ENCODE measurements at regions of chr19 and their contacts with region 1.

Region 1: GRCh38 chr19:48821671-48822070 is 10.8 kb upstream of the BCAT2 start:
- DNase-seq: no peak
- H3K4me3 ChIP-seq: no peak overlapping the region
- H3K27ac ChIP-seq: no peak overlapping the region
- H3K4me1 ChIP-seq: peaks cover 3% of the 10 kb centered on the region
- CTCF ChIP-seq: no peak

Region 2: GRCh38 chr19:48271531-48272151 is 550.0 kb before region 1 on chr19:
- CTCF ChIA-PET with region 1: no interaction called
- POLR2A ChIA-PET with region 1: no interaction called
- intact Hi-C with region 1: no loop called
- DNase-seq: peak; percentile 31
- H3K4me3 ChIP-seq: peak overlapping the region; percentile 58
- H3K27ac ChIP-seq: no peak overlapping the region
- H3K4me1 ChIP-seq: no peaks in the 10 kb centered on the region
- CTCF ChIP-seq: no peak

Region 3: DNA sequence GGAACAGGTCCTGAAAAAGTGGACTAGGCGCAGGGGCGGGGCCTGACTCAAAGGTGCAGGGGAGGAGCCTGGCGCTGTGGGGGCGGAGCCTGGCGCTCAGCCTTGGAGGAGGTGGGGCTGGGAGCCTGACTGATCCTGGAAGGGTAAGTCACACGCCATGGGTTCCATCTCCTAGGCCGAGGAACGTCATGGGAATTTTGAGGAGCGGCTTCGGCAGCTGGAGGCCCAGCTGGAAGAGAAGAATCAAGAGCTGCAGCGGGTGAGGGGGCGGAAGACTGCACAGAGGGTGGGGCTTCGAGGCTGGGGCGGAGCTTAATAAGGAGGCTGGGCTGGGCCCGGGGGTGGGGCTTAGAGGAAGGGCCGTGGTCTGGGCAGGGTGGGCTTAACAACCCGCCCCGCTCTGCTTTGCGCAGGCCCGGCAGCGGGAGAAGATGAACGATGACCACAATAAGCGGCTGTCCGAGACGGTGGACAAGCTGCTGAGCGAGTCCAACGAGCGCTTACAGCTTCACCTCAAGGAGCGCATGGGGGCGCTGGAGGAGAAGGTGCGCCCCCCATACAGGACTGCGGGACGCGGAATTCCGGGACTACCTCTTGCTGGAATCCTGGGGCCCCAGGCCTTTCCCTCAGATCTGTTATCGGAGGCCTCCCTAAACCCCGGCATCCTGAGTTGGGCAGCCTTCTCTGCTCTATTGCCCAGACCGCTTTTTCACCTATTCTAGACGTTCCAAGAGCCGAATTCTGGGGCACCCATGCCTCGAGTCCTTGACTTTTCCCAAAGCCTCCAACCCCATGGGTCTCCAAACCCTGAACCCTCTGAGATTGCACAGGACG is 312.2 kb after region 1 on chr19:
- CTCF ChIA-PET with region 1: no interaction called
- POLR2A ChIA-PET with region 1: no interaction called
- intact Hi-C with region 1: loop called (anchors 5 kb)
- DNase-seq: peak; percentile 48
- H3K4me3 ChIP-seq: peak overlapping the region; percentile 51
- H3K27ac ChIP-seq: no peak overlapping the region
- H3K4me1 ChIP-seq: peaks cover 8% of the 10 kb centered on the region
- CTCF ChIP-seq: no peak